Sigmoid colon (tissue), 7 donors: ENCODE measurements at regions of chr13 and their contacts with region 1.

Region 1: GRCh38 chr13:30306762-30307193 is 573 bp downstream of the KATNAL1 start:
- DNase-seq: peak; percentile 97
- H3K4me3 ChIP-seq: peak overlapping the region; percentile 60 to 87 (median 82)
- H3K27ac ChIP-seq: peak overlapping the region; percentile 89 to 95 (median 94)
- H3K4me1 ChIP-seq: peaks cover 0 to 57% (median 38%) of the 10 kb centered on the region in 4 donors
- H3K27me3 ChIP-seq: no peaks in the 10 kb centered on the region
- CTCF ChIP-seq: no peak
- EP300 ChIP-seq: no peak
- POLR2A ChIP-seq: no peak

Region 2: DNA sequence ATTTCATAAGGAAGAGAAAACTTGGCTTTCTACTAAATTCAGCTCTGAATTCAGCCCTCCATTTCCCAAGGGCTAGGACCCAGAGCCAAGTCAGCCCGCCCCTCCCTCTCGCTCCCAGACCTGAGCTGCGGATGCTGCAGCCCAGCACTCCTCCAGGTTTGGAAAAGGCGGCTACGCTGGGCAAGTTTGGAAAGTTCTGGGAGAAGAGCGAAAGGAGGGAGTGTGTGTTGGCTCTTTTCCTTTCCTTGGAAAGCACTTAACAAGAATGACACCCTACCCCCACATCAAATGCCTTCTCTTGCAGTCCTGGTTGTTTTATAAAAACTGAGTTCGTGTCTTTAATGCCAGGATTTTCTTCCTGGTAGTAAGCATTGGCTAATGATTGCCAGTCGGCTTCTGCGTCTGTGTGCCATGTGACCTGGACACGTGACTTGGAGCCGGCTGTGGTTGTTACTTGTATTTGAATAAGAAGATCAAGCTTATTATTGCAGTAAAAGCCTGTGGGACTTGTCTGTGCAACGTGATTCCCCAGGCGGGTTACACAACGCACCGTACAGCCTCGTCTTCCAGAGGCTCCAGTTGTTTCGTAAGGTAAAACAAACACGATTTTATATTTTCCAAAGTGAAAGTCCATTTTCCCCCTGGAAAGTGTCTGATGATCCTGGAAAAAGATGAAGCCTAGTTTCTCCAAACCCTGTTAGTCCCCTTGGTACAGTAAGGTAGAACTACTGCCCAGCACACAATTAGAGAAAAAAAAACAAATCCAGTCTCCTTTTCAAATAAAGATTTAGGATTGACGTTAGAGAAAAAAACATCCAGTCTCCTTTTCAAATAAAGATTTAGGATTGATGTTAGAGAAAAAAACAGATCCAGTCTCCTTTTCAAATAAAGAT is 88.7 kb after region 1 on chr13:
- intact Hi-C with region 1: loop called (anchors 2 kb)
- DNase-seq: peak; percentile 99
- H3K4me3 ChIP-seq: peak overlapping the region; percentile 49 to 65 (median 57)
- H3K27ac ChIP-seq: peak overlapping the region; percentile 90 to 97 (median 94)
- H3K4me1 ChIP-seq: peaks cover 0 to 15% (median 2%) of the 10 kb centered on the region in 4 donors
- H3K27me3 ChIP-seq: no peaks in the 10 kb centered on the region
- CTCF ChIP-seq: no peak
- EP300 ChIP-seq: peak in 2 of 4 donors; percentile 2 to 69
- POLR2A ChIP-seq: peak; percentile 38 to 60